GM12878 (cell line): ENCODE measurements at regions of chr5 and their contacts with region 1.

Region 1: DNA sequence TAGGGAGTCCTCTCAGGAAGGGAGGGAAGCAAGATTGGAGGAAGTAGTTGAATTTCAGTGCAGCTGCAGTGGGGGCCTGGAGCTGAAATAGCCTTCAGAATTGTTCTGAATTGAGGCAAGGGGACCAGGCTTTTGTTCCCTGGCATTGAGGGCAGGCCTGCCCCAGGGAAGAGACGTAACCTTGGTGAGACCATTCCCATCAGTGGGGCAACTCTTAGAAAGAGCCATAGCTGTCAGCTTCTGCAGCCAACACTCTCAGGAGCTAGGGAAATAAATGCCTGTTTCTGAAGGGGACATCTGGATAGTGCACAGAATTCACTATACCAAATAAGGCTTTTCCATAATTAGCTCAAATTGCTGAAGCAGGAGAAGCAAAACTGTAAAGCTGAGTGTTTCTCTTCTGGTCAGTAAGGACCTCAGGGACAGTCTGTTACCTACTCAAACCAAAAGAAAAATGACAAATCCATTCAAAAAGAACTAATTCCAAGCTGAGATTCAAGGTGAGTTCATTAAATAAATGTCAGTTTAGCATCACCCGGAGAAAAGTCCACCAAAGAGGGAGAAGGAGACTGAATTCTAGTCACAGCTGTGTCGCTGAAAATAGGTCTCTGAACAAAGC is 44.0 kb downstream of the LYRM7 start:
- DNase-seq: no peak
- ATAC-seq: no peak
- H3K4me3 ChIP-seq: peak overlapping the region; percentile 50
- H3K27ac ChIP-seq: peak overlapping the region; percentile 94
- H3K4me1 ChIP-seq: peaks cover 10% of the 10 kb centered on the region; the same call in 1 of the 2 replicates
- H3K27me3 ChIP-seq: no peaks in the 10 kb centered on the region
- CTCF ChIP-seq: no peak
- EP300 ChIP-seq: no peak
- POLR2A ChIP-seq: no peak
- RAD21 ChIP-seq: no peak

Region 2: GRCh38 chr5:131230406-131230805 is 15.7 kb after region 1 on chr5:
- CTCF ChIA-PET with region 1: interaction called, 33 read pairs
- POLR2A ChIA-PET with region 1: interaction called, 142 read pairs
- RAD21 ChIA-PET with region 1: interaction called, 117 read pairs
- SMC1A ChIA-PET with region 1: interaction called, 166 read pairs
- in situ Hi-C with region 1: no loop called
- intact Hi-C with region 1: no loop called
- DNase-seq: no peak
- ATAC-seq: peak; percentile 89
- H3K4me3 ChIP-seq: peak overlapping the region; percentile 6
- H3K27ac ChIP-seq: peak overlapping the region; percentile 38
- H3K4me1 ChIP-seq: peaks cover 14% of the 10 kb centered on the region; the same call in 1 of the 2 replicates
- H3K27me3 ChIP-seq: no peaks in the 10 kb centered on the region
- CTCF ChIP-seq: no peak
- EP300 ChIP-seq: no peak
- POLR2A ChIP-seq: no peak
- RAD21 ChIP-seq: no peak

Region 3: DNA sequence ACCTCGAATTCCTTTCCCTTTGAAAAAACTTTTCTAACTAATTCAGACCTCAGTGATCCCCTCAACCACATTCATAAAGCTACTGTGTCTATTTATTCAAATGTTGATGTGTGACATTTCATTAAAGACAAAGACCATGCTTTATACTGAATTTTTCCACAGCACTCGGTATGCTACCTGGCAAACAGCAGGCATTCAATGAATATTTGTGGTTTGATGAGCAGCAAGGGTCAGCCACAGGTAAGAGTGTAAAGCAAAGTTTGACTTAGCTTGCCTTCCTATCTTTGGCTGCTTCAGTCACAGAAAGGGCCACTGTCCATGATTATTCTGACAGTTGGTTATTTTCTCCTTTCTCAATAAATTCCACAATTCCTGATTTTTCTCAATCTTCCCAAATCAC is 44.0 kb after region 1 on chr5:
- CTCF ChIA-PET with region 1: interaction called, 65 read pairs
- POLR2A ChIA-PET with region 1: interaction called, 309 read pairs
- RAD21 ChIA-PET with region 1: interaction called, 302 read pairs
- SMC1A ChIA-PET with region 1: interaction called, 1,218 read pairs
- in situ Hi-C with region 1: no loop called
- intact Hi-C with region 1: no loop called
- DNase-seq: no peak
- ATAC-seq: no peak
- H3K4me3 ChIP-seq: no peak overlapping the region
- H3K27ac ChIP-seq: peak overlapping the region; percentile 35
- H3K4me1 ChIP-seq: peaks cover 24% of the 10 kb centered on the region
- H3K27me3 ChIP-seq: no peaks in the 10 kb centered on the region
- CTCF ChIP-seq: no peak
- EP300 ChIP-seq: no peak
- POLR2A ChIP-seq: no peak
- RAD21 ChIP-seq: no peak

Region 4: GRCh38 chr5:132294728-132295504 is 1080.2 kb after region 1 on chr5:
- CTCF ChIA-PET with region 1: no interaction called
- POLR2A ChIA-PET with region 1: no interaction called
- RAD21 ChIA-PET with region 1: no interaction called
- SMC1A ChIA-PET with region 1: no interaction called
- in situ Hi-C with region 1: no loop called
- intact Hi-C with region 1: no loop called
- DNase-seq: no peak
- ATAC-seq: peak; percentile 19
- H3K4me3 ChIP-seq: peak overlapping the region; percentile 70
- H3K27ac ChIP-seq: no peak overlapping the region
- H3K4me1 ChIP-seq: peaks cover 21% of the 10 kb centered on the region
- H3K27me3 ChIP-seq: peaks cover 4 to 22% of the 10 kb centered on the region in 2 experiments; a peak in 3 of 4 replicates
- CTCF ChIP-seq: no peak
- EP300 ChIP-seq: no peak
- POLR2A ChIP-seq: no peak
- RAD21 ChIP-seq: no peak